Sigmoid colon (tissue), 7 donors: ENCODE measurements at regions of chr19 and their contacts with region 1.

Region 1: DNA sequence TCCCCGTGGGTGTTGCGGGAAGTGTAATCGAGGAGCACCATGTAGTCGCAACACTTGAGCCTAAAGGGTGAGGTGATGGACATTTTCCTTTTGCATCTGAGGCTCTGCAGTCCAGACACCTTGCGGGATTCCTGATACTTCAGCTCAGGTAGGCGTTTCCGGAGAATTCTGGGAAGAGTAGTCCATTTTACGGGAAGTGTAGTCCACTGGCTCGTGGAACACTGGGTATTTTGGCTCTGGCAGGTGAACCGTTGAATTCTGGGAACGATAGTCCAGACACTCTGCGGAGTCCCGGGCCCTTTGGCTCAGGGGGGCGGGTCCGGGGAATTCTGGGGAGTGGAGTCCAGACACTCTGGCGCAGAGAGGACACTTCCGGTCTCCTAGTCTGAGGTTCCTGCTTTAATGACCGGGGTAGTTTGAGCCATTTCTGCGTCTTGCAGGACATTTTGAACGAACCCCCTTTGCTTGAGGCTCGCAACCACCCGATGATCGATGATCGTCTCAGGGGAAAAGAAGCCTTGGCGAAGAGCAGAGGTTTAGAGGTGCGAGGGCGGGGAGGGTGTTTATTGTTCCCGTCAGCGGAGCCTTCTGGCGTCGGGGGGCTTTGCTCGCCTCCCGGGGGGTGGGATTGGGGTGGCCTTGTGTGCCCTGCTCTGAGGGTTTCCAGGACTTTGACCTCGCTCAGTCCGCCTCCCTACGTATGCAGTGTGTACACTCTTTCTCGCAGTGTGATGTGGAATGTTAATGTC is at the start of gene ZNF223:
- DNase-seq: peak; percentile 97
- H3K4me3 ChIP-seq: peak within 1 kb of the TSS; percentile 58 to 81 (median 68)
- H3K27ac ChIP-seq: peak within 1 kb of the TSS; percentile 73 to 78 (median 77)
- H3K4me1 ChIP-seq: peaks cover 0 to 17% (median 13%) of the 10 kb centered on the region in 4 donors
- H3K27me3 ChIP-seq: peaks cover 0 to 7% (median 0%) of the 10 kb centered on the region in 3 donors
- CTCF ChIP-seq: no peak
- EP300 ChIP-seq: peak in 1 of 4 donors; percentile 28
- POLR2A ChIP-seq: no peak
- total RNA-seq, gene ZNF223: 2.5 to 5.0 (median 4.2) TPM

Region 2: DNA sequence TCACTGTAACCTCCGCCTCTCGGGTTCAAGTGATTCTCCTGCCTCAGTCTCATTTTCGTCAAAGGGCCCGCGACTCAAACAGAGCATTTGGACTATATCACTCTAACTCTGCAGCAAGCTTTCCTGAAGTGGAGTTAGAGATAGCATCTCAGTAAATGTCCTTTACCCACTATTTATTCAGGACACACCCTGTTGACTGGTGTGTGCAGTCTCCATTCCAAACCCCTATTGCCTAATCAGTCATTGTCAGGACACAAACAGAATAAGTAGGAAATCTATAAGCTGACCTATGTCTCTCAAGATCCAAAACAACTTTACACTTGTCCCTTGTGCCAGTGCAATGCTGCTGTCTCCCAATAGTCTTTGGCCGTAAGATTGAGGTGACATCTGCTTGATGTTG is 25.2 kb before region 1 on chr19:
- intact Hi-C with region 1: loop called (anchors 2 kb)
- DNase-seq: no peak
- H3K4me3 ChIP-seq: no peak overlapping the region
- H3K27ac ChIP-seq: no peak overlapping the region
- H3K4me1 ChIP-seq: peaks cover 0 to 11% (median 7%) of the 10 kb centered on the region in 4 donors
- H3K27me3 ChIP-seq: no peaks in the 10 kb centered on the region
- CTCF ChIP-seq: no peak
- EP300 ChIP-seq: no peak
- POLR2A ChIP-seq: no peak

Region 3: GRCh38 chr19:44093931-44094765 is 42.3 kb after region 1 on chr19 and contains the start of gene ZNF224:
- intact Hi-C with region 1: loop called (anchors 2 kb)
- DNase-seq: peak; percentile 94
- H3K4me3 ChIP-seq: peak within 1 kb of the TSS; percentile 69 to 83 (median 76)
- H3K27ac ChIP-seq: peak within 1 kb of the TSS; percentile 80 to 81 (median 81)
- H3K4me1 ChIP-seq: peaks cover 0 to 13% (median 10%) of the 10 kb centered on the region in 4 donors
- H3K27me3 ChIP-seq: no peaks in the 10 kb centered on the region
- CTCF ChIP-seq: no peak
- EP300 ChIP-seq: no peak
- POLR2A ChIP-seq: no peak
- total RNA-seq, gene ZNF224: 16.6 to 23.0 (median 19.6) TPM

Region 4: DNA sequence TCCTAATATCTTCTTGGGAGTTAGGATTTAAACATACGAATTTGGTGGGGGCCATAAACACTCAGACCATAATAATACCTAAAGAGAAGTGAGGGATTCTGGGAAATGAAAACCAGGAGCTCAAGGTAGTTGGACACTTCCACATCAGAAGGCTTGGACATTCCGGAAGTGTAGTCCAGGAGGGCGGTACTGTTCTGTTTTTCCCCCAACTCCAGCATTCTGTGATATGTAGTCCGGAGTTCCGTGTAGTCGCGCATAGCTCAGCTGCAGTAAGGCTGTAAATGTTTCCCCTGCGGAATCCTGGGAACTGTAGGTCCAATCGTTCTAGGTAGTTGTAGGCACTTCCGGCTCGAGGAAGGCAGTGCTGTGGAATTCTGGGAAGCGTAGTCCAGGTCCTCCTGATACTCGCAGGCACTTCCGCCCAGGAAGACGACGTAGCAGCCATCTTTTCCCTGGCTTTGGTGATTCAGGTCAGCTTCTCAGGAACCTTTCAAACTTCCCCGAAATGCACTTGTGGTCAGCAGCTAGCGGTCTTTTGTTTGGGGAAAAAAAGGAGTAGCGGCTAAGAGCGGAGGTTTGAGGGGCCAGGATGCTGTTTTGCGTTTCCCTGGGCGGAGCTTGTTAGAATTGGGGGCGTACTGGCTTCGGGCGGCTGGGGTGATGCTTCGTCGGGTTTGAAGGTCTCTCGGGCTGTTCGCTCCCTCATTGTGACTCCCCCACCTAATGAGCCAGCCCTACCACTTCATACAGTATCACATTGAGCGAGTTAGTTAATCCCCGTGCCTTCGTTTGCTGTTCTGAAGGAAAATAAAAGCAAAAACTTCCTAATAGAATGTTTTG is 113.1 kb after region 1 on chr19 and contains the start of gene ZNF226:
- intact Hi-C with region 1: loop called (anchors 5 kb)
- DNase-seq: peak; percentile 95
- H3K4me3 ChIP-seq: peak within 1 kb of the TSS; percentile 45 to 73 (median 65)
- H3K27ac ChIP-seq: peak within 1 kb of the TSS; percentile 82 to 87 (median 84)
- H3K4me1 ChIP-seq: peaks cover 0 to 12% (median 11%) of the 10 kb centered on the region in 4 donors
- H3K27me3 ChIP-seq: no peaks in the 10 kb centered on the region
- CTCF ChIP-seq: no peak
- EP300 ChIP-seq: no peak
- POLR2A ChIP-seq: no peak
- total RNA-seq, gene ZNF226: 14.4 to 20.2 (median 18.6) TPM